ENCODE measurements at regions of chr22 and their contacts with region 1.

Region 1: DNA sequence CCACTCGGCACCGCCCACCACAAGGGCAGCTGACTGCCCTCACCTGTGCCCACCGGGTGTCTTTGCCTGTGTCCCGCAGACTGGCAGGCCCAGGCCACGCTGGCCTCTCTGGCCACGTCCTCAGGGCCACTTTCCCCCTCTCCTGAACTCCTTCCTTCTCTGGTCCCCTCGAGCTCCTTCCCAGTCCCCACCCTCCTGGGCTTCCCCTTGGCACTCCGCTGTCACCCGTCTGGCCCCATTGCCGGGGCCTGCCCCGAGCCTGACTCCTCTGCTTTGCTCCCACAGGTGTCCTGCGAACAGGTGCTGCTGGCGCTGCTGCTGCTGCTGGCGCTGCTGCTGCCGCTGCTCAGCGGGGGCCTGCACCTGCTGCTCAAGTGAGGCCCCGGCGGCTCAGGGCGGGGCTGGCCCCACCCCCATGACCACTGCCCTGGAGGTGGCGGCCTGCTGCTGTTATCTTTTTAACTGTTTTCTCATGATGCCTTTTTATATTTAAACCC is 14.2 kb downstream of the MCAT start:
- DNase-seq: no peak
- H3K4me3 ChIP-seq: no peak overlapping the region
- CTCF ChIP-seq: no peak
- POLR2A ChIP-seq: no peak

Region 2: GRCh38 chr22:43110444-43110926 is 18.5 kb before region 1 on chr22 and contains the start of gene BIK:
- intact Hi-C with region 1: no loop called
- DNase-seq: no peak
- H3K4me3 ChIP-seq: peak within 1 kb of the TSS; percentile 28
- CTCF ChIP-seq: no peak
- POLR2A ChIP-seq: no peak
- total RNA-seq, gene BIK: 2.6 to 12.6 (median 9.5) TPM

Region 3: DNA sequence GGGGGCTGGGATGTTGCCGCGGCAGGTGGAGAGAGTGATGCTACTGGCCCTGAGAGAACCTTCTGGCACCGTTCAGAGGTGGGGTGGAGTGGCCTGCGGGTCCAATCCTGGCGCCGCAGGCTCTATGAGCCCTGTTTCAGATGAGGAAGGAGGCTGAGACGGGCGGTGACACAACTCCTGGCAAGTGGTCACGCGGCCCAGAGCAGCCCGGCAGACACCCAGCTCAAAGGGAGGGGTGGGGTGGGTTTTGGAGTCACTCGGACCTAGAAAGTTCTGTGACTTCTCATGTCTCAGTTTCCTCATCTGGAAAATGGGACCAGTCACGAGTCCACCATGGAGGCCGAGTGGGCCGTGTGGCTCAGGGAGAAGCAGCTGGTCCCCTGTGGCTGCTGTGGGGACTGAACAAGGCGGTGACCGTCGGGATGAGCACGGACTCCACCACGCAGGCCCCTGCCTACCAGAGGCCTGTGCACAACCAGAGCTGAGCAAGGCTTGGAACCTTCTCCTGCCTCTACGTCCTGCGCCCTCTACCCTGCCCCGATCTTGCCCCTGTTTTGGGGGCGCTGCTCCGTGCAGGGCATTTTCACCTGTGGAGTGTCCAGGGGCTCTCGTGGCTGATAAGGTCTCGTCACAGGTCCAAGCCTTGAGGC is 26.0 kb after region 1 on chr22:
- intact Hi-C with region 1: loop called (anchors 2 kb)
- DNase-seq: peak; percentile 47 to 93
- H3K4me3 ChIP-seq: no peak overlapping the region
- CTCF ChIP-seq: no peak
- POLR2A ChIP-seq: no peak

Region 4: DNA sequence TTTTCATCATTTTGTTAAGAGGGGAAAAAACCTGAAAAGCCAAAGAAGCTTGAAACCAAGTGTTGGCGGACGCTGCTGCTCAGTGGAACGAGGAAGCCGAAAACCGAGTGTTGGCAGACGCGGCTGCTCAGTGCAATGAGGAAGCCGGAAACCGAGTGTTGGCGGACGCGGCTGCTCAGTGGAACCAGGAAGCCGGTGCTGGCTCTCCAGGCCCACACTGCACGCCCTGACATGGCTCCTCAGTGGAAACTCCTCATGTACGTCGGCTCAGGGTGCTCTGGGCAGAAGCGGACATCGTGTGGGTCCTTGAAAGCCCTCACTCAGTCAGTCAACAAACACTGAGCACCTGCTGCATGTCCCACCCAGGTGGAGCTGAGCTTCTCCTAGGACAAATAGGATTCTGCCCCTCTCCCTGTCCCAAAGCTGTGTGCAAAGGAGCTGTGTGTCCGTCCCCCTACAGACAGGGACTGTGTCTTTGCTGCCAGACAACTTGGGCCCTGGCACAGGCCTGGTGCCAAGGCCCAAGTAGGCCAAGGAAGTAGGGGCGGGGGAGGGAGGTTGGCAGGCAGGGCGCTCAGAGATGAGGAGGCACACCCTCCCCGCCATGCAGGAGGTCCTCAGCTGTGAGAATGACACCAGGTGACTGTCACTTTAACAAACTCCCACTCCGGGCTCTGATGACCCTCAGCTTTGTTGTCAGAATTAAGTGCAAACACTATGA is 1843.5 kb after region 1 on chr22:
- intact Hi-C with region 1: no loop called
- DNase-seq: no peak
- H3K4me3 ChIP-seq: no peak overlapping the region
- CTCF ChIP-seq: no peak
- POLR2A ChIP-seq: no peak